Activated T-helper 2 cell treated with anti-CD3 and anti-CD28 coated beads, Interferon-gamma antibody, Interleukin-2, Interleukin-4, amounts not matched to agents 10 μg/mL and 5 μg/mL and 100 μg/mL, durations not matched to agents 14 hours and 24 hours and 36 hours (primary cell): ENCODE measurements at regions of chr3 and their contacts with region 1.

Region 1: DNA sequence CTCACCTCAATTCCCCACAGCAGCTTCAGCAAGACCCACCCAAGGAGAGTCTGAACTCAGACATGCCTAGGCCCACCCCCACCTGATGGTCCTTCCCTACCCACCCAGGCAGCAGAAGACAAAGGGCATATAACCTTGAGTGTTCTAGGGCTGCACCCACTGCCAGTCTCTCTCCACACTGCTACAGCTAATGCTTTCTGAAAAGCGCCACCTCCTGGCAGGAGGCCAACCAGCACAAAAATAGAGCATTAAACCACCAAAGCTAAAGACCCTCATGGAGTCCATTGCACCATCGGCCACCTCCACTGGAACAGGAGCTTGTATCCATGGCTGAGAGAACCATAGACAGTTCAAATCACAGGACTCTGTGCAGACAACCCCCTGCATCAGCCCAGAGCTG is 11.3 kb upstream of the RPL39L start:
- DNase-seq: peak; percentile 44
- H3K4me3 Mint-ChIP-seq: no peak overlapping the region
- H3K27ac Mint-ChIP-seq: no peak overlapping the region
- H3K4me1 Mint-ChIP-seq: peaks cover 6% of the 10 kb centered on the region
- H3K27me3 Mint-ChIP-seq: peaks cover 46% of the 10 kb centered on the region

Region 2: DNA sequence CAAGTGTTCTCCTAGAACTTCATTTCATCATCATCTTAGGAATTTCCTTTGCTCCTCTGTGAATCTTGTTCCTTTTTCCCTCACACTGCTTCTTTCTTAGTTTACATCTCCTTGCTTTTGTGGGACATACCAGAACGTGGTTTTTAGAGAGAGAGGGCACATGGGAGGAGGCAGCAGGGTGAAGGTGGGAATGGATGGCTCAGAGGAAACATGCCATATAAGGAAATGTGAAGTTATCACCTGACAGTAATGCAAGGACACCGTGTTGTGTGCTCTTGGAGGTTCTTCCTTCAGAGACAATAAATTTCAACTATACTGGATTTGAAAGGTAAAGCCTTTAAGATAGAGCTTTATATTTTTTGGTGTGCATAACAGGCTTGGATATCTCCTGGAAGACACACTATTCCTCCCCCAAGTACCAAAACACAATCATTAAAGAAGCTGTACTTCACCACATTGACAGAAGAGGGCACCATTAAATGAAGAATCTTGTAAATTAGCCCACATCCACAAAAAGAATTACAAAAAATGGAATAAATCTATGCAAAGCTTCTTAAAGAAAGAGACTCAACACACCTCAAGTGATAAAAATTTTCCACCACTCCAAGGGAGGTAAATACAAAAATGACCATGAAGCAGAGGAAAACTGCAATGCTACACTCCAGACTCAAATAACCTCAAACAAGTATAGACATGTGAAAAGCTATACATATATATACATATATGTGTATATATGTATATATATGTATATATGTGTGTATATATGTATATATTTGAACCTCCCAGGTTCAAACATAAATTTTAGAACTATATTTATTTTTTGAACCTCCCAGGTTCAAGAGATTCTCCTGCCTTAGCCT is 37.4 kb before region 1 on chr3:
- intact Hi-C with region 1: loop called (anchors 1 kb)
- DNase-seq: no peak
- H3K4me3 Mint-ChIP-seq: no peak overlapping the region
- H3K27ac Mint-ChIP-seq: no peak overlapping the region
- H3K4me1 Mint-ChIP-seq: peaks cover 12% of the 10 kb centered on the region
- H3K27me3 Mint-ChIP-seq: no peaks in the 10 kb centered on the region

Region 3: GRCh38 chr3:187139126-187139894 is 11.3 kb before region 1 on chr3 and contains the start of gene RPL39L:
- intact Hi-C with region 1: no loop called
- DNase-seq: peak; percentile 91
- H3K4me3 Mint-ChIP-seq: peak within 1 kb of the TSS; percentile 89
- H3K27ac Mint-ChIP-seq: peak within 1 kb of the TSS; percentile 94
- H3K4me1 Mint-ChIP-seq: peaks cover 32% of the 10 kb centered on the region
- H3K27me3 Mint-ChIP-seq: no peaks in the 10 kb centered on the region
- total RNA-seq, gene RPL39L: 11.0 and 13.0 TPM in 2 replicates

Region 4: GRCh38 chr3:187172929-187173328 is 22.3 kb after region 1 on chr3:
- intact Hi-C with region 1: loop called (anchors 1 kb)
- DNase-seq: no peak
- H3K4me3 Mint-ChIP-seq: no peak overlapping the region
- H3K27ac Mint-ChIP-seq: no peak overlapping the region
- H3K4me1 Mint-ChIP-seq: peaks cover 6% of the 10 kb centered on the region
- H3K27me3 Mint-ChIP-seq: peaks cover 12% of the 10 kb centered on the region